Common myeloid progenitor, CD34-positive (primary cell): ENCODE measurements at regions of chr5 and their contacts with region 1.

Region 1: GRCh38 chr5:132866342-132867045 is at the starts of genes GDF9 and UQCRQ:
- DNase-seq: peak; percentile 100
- H3K4me3 ChIP-seq: peak within 1 kb of the TSS; percentile 64 to 95 (median 86)
- H3K27ac ChIP-seq: peak within 1 kb of the TSS; percentile 75 to 91
- H3K4me1 ChIP-seq: peaks cover 5 to 20% (median 17%) of the 10 kb centered on the region in 4 experiments
- H3K27me3 ChIP-seq: no peaks in the 10 kb centered on the region

Region 2: DNA sequence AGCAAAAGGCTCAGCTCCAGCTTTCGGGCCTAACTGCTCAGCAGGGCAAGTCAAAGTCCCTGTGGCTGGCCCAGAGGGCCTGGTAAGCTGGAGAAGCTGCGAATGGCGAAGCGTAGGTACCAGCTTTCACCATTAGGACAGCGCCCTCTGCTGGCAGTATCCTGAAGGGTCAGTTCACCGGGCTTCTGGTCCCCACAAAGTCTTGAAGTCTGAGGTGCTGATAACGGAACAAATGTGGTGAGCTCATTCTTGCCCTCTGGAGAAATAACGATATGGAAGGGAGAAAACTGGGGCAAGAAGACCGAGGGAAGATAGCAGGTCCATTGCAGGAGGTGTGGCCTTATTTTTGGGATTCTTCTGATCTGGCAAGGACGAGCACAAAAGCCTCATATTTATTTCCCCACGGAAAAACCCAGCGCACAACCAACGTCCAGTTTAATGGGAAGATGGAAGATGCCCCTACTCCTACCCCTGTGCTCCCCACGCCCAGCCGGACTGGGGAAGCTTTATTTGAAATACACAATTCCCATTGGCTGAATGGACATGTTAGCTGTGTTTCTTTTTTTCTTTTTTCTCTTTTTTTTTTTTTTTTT is 46.2 kb before region 1 on chr5:
- CTCF ChIA-PET with region 1: interaction called, 12 read pairs
- POLR2A ChIA-PET with region 1: interaction called, 3 read pairs
- DNase-seq: peak; percentile 92 to 96 (median 94)
- H3K4me3 ChIP-seq: peak overlapping the region in 2 of 7 experiments; percentile 71 to 72
- H3K27ac ChIP-seq: no peak overlapping the region
- H3K4me1 ChIP-seq: peaks cover 0 to 22% (median 13%) of the 10 kb centered on the region in 4 experiments
- H3K27me3 ChIP-seq: peaks cover 0 to 56% (median 28%) of the 10 kb centered on the region in 5 experiments

Region 3: DNA sequence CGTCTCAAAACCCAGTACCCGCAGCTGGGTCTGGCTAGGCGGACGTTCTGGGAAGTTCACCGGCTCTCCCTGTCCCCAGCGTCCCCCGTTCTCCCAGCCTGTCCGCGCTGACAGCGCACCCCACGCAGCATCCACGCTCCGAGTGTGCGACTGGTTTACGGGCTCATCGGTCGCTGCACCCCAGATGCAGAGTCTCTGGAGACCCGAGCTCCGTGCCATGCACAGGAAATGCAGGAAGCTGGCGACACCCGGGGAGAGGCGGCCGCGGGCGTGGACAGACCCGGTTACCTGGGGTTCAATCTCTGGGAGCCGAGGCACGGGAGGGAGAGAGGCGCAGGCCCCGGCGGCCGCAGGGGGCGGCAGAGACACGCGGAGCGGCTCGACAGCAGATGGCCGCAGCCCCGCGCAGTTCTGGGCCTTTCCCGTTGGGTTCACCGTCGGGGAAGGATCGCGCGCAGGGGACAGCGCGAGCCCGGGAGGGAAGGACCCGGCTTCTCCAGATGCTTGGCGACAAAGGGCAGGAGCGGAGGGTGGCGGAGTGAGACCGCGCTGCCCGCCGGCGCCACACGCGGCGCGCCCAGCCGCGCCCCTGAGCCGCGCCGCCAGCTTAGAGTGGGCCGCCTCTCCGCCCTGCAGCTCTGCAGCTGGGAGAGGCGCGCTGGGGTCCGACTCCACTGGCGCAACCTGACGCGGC is 36.6 kb before region 1 on chr5:
- CTCF ChIA-PET with region 1: interaction called, 11 read pairs
- POLR2A ChIA-PET with region 1: interaction called, 3 read pairs
- DNase-seq: peak; percentile 60 to 78 (median 72)
- H3K4me3 ChIP-seq: peak overlapping the region; percentile 33 to 80 (median 71)
- H3K27ac ChIP-seq: no peak overlapping the region
- H3K4me1 ChIP-seq: peaks cover 0 to 27% (median 22%) of the 10 kb centered on the region in 4 experiments
- H3K27me3 ChIP-seq: peaks cover 0 to 61% (median 39%) of the 10 kb centered on the region in 5 experiments

Region 4: GRCh38 chr5:132854301-132854700 is 12.2 kb before region 1 on chr5:
- CTCF ChIA-PET with region 1: interaction called, 34 read pairs
- POLR2A ChIA-PET with region 1: no interaction called
- DNase-seq: no peak
- H3K4me3 ChIP-seq: no peak overlapping the region
- H3K27ac ChIP-seq: no peak overlapping the region
- H3K4me1 ChIP-seq: peaks cover 0 to 2% (median 0%) of the 10 kb centered on the region in 4 experiments
- H3K27me3 ChIP-seq: no peaks in the 10 kb centered on the region

Region 5: DNA sequence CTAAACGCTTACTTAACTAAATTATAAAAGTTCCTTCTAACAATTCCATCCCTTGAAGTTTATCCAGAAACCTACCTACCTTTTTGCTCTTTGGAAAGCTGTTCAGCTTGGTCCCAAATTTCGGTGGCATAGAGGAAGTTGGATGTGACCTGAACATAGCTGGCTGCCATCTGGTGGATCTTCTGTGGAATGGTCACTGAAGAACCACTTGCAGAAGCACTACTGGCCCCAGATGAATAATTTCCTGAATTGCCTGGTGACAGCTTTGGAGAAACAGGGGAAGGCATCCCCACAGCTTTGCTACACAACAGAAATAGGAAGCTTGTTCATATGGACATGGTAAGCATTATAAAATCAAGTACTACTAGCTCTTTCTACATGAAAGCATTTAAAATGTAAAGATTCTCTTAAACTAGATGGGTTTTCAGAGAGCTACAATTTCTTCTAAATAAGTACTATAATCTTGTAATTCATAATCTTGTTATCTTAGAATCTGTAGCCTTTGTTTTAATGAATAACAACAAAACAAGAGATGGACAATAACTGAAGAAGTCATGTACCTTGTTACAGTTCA is 16.9 kb after region 1 on chr5:
- CTCF ChIA-PET with region 1: interaction called, 31 read pairs
- POLR2A ChIA-PET with region 1: no interaction called
- DNase-seq: peak; percentile 72 to 84 (median 83)
- H3K4me3 ChIP-seq: no peak overlapping the region
- H3K27ac ChIP-seq: no peak overlapping the region
- H3K4me1 ChIP-seq: peaks cover 0 to 3% (median 1%) of the 10 kb centered on the region in 4 experiments
- H3K27me3 ChIP-seq: no peaks in the 10 kb centered on the region

Region 6: GRCh38 chr5:132927355-132928061 is 61.0 kb after region 1 on chr5:
- CTCF ChIA-PET with region 1: no interaction called
- POLR2A ChIA-PET with region 1: no interaction called
- DNase-seq: no peak
- H3K4me3 ChIP-seq: no peak overlapping the region
- H3K27ac ChIP-seq: no peak overlapping the region
- H3K4me1 ChIP-seq: no peaks in the 10 kb centered on the region
- H3K27me3 ChIP-seq: no peaks in the 10 kb centered on the region